HepG2 (cell line): ENCODE measurements at regions of chr17 and their contacts with region 1.

Region 1: DNA sequence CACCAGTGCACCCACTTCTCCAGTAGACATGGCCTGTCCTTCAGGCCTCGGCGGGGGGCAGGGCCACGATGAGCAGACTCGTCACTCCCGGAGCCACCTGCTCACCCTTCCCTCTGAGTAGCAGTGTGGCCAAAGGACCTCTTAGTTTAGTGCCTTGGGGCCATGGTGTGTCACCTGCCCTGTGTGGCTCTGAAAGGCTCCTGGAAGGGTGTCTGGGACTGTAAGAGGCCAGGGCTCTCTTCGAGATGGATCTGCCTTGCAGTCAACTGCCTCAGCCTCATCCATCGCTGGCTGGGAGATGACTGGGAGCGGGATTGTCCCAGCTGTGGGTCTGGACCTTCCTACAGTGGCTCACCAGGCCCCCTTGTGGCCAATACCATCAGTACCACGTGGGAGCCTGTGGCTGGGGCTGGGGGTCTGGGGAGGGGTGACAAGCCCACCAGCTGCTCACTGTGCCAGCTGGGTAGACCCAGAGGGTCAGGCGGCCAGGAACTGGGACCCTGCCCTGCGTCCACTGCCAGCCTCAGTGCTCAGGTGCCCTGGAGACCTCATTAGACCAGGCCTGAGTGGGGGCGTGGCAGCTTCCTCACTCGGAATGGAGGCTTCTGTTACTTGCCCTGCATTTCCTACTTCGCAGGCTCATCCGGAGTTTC is 133.4 kb downstream of the OR1D5 start:
- DNase-seq: peak; percentile 29
- ATAC-seq: peak; percentile 93
- H3K4me3 ChIP-seq: no peak overlapping the region
- H3K27ac ChIP-seq: no peak overlapping the region
- H3K4me1 ChIP-seq: peaks cover 12% of the 10 kb centered on the region
- H3K27me3 ChIP-seq: no peaks in the 10 kb centered on the region
- CTCF ChIP-seq: peak; percentile 85
- EP300 ChIP-seq: no peak
- POLR2A ChIP-seq: no peak
- RAD21 ChIP-seq: peak; percentile 70

Region 2: GRCh38 chr17:2828397-2829038 is 101.5 kb before region 1 on chr17:
- CTCF ChIA-PET with region 1: interaction called, 15 read pairs
- POLR2A ChIA-PET with region 1: no interaction called
- in situ Hi-C with region 1: no loop called
- intact Hi-C with region 1: loop called (anchors 1 kb)
- DNase-seq: peak; percentile 52
- ATAC-seq: peak; percentile 91
- H3K4me3 ChIP-seq: no peak overlapping the region
- H3K27ac ChIP-seq: no peak overlapping the region
- H3K4me1 ChIP-seq: peaks cover 18% of the 10 kb centered on the region
- H3K27me3 ChIP-seq: no peaks in the 10 kb centered on the region
- CTCF ChIP-seq: peak; percentile 94
- EP300 ChIP-seq: no peak
- POLR2A ChIP-seq: no peak
- RAD21 ChIP-seq: peak; percentile 91

Region 3: DNA sequence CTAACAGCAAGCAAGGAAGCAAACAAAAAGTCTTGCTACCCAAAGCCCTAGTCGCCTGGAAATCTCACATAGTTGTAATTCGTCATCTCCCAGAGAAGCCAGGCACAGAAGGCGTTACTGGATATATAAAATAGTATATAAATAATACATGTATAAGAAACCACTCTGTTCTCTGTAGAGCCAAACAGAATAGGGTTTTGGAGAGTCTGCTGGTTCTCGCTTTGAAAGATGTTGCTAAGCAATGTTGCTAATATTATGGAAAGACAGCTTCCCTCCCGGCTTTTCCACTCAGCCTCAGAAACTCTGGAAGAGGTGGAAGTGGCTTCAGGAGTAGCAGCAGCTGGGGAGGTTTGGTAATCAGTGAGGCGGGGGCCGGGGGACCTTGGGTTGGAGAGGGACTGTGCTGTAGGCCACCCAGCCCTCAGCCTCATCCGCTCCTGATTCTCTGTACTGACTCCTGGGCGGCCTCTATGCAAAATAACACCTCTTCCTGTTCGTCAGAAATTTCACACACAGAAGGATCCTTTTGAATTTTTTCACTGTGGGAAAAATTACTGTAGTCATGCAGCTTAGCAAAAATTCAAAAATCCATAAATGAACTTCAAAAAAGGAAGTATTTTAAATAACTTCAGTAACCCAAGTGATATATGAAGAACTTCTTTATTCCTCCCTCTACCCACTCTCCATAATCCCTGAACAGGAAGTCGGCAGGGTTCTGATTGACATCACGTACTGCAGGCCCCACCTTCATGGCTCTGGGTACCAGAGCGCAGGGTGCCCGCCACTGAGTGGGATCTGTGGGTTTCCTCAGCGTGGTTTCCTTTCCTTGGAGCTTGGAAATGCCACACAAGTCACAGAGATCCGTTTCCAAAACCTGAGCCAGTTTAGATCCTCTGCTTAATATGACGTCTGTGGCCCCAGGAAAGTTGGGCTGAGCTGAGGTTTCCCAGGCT is 82.3 kb before region 1 on chr17:
- CTCF ChIA-PET with region 1: interaction called, 23 read pairs
- POLR2A ChIA-PET with region 1: no interaction called
- in situ Hi-C with region 1: loop called (anchors 5 kb)
- intact Hi-C with region 1: loop called (anchors 1 kb)
- DNase-seq: no peak
- ATAC-seq: no peak
- H3K4me3 ChIP-seq: no peak overlapping the region
- H3K27ac ChIP-seq: no peak overlapping the region
- H3K4me1 ChIP-seq: 0 out of 2 replicates have a peak, but pooled peaks cover 7% of the 10 kb centered on the region
- H3K27me3 ChIP-seq: peaks cover 0 to 2% of the 10 kb centered on the region in 2 experiments; a peak in 1 of 5 replicates
- CTCF ChIP-seq: no peak
- EP300 ChIP-seq: no peak
- POLR2A ChIP-seq: no peak
- RAD21 ChIP-seq: no peak

Region 4: GRCh38 chr17:2853111-2853721 is 76.8 kb before region 1 on chr17:
- CTCF ChIA-PET with region 1: interaction called, 23 read pairs
- POLR2A ChIA-PET with region 1: no interaction called
- in situ Hi-C with region 1: loop called (anchors 5 kb)
- intact Hi-C with region 1: loop called (anchors 1 kb)
- DNase-seq: no peak
- ATAC-seq: peak; percentile 18
- H3K4me3 ChIP-seq: peak overlapping the region; percentile 32 to 73 (median 61); a peak in 4 of 6 replicates
- H3K27ac ChIP-seq: no peak overlapping the region
- H3K4me1 ChIP-seq: peaks cover 28% of the 10 kb centered on the region
- H3K27me3 ChIP-seq: peaks cover 2 to 14% of the 10 kb centered on the region in 2 experiments; a peak in 4 of 5 replicates
- CTCF ChIP-seq: no peak
- EP300 ChIP-seq: no peak
- POLR2A ChIP-seq: no peak
- RAD21 ChIP-seq: no peak

Region 5: DNA sequence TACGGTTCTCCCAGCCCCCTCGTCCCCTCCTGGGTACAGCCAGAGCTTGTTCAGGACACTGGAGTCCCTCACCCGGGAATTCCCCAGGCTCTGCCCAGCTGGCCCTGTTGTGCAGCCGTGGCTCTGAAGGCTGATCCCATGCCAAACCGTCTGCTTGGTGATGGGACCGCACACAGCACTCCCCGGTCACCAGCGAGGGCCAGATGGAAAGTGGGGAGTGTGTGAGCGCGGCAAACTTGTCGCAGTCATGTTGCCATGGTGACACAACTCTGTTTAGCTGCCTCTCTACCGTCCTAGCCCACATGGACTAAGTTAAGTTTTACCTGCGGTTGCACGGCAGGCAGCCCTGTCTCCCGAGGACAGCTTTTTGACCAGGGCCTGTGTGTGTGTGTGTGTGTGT is 25.9 kb before region 1 on chr17:
- CTCF ChIA-PET with region 1: no interaction called
- POLR2A ChIA-PET with region 1: no interaction called
- in situ Hi-C with region 1: no loop called
- intact Hi-C with region 1: no loop called
- DNase-seq: no peak
- ATAC-seq: no peak
- H3K4me3 ChIP-seq: no peak overlapping the region
- H3K27ac ChIP-seq: no peak overlapping the region
- H3K4me1 ChIP-seq: peaks cover 6% of the 10 kb centered on the region
- H3K27me3 ChIP-seq: no peaks in the 10 kb centered on the region
- CTCF ChIP-seq: no peak
- EP300 ChIP-seq: no peak
- POLR2A ChIP-seq: no peak
- RAD21 ChIP-seq: no peak

Region 6: DNA sequence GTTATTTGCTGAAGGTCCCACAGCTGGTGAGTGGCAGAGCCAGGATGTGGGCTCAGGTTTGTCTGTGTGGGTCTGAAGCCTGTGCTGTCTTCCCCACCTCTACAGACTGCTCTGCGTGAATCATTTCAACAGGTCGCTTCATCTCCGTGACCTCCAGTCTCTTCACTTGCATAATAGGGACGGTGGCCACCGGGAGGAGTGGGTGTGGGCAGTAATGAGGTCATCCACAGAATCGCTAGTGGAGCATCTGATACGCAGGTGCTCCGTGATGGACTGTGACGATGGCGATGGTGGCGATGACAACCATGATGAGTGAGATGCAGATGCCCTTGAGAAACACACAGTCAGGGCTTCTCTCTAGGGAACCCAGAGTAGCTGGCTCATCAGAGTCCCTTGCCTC is 13.5 kb before region 1 on chr17:
- CTCF ChIA-PET with region 1: no interaction called
- POLR2A ChIA-PET with region 1: no interaction called
- in situ Hi-C with region 1: no loop called
- intact Hi-C with region 1: no loop called
- DNase-seq: no peak
- ATAC-seq: no peak
- H3K4me3 ChIP-seq: no peak overlapping the region
- H3K27ac ChIP-seq: no peak overlapping the region
- H3K4me1 ChIP-seq: no peaks in the 10 kb centered on the region
- H3K27me3 ChIP-seq: no peaks in the 10 kb centered on the region
- CTCF ChIP-seq: no peak
- EP300 ChIP-seq: no peak
- POLR2A ChIP-seq: no peak
- RAD21 ChIP-seq: no peak